Activated B cell treated with CpG ODN at 0.5 μM for 24 hours (primary cell): ENCODE measurements at regions of chr6 and their contacts with region 1.

Region 1: DNA sequence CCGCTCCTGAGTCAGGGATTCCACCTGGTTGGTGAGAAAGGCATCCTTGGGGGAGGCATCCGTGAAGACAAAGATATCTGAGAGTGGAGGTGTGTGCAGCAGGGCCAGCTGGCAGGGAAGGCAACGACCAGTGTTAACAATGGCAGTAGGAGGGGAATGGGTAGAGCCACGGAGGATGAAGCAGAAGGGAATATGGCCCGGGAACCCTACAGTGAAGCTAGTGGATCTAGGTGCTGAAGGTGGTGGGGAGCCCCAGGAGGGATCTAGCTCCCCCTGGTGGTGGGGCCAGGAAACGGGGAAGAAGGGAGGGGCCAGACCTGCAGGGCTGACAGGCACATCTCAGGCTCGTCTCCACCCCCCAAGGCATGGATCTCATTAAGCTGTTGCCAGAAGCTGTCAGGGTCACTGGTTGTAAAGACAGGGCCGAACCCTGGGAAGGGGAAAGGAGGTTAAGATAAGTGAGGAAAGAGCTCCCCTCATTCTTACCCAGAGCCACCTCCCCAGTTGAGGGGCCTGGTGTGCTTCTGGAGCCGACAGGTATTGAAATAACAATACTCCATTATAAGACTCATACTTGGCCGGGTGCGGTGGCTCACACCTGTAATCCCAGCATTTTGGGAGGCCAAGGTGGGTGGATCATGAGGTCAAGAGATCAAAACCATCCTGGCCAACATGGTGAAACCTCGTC is 7.3 kb downstream of the VWA7 start:
- DNase-seq: peak; percentile 76
- ATAC-seq: peak; percentile 98
- H3K4me3 Mint-ChIP-seq: no peak overlapping the region
- H3K27ac Mint-ChIP-seq: no peak overlapping the region
- H3K4me1 Mint-ChIP-seq: peaks cover 16% of the 10 kb centered on the region
- H3K27me3 Mint-ChIP-seq: no peaks in the 10 kb centered on the region
- CTCF ChIP-seq: no peak

Region 2: DNA sequence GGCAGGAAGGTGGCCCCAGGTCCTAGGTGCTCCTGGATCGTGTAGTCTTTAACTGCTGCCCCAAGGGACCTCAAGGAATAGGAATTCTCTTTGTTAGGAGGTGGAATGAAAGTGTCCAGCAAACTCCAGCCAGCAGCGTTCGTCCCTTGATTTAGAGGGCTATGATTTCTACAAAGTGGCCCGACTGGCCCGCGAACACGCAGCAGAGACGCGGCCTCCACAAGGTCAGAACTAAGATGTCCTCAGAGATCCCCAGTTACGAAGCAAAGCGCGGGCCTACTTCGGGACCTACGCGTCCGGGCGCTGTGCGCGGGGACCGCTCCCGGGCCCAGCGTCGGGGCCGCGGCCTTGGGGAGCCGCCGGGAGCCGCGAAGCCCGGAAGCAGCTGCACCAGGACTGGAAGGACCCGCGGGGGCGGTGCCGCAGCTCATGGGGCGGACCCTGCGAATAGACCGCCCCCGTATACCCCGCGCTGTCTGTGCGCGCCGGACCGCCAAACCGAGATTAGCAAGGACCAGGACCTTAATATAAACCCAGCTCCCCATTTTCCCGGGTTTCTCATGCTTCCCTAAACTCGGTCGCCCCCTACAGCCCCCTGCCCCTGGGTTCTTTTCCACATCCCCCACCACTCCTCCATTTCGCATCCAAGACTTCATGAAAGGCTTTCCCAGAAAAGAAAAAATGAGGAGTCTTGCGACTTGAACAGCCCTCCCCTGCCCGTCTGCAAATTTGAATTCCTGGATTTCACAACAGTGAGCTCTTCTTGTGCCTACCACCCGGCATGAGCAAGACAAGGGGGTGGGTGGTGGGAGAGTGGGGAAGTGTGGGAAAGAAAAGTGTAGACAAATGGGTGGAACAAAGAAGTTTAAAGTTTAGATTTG is 109.2 kb before region 1 on chr6 and contains the start of gene C6orf47:
- CTCF ChIA-PET with region 1: no interaction called
- POLR2A ChIA-PET with region 1: interaction called, 14 read pairs
- intact Hi-C with region 1: no loop called
- DNase-seq: peak; percentile 77
- ATAC-seq: peak; percentile 68
- H3K4me3 Mint-ChIP-seq: peak within 1 kb of the TSS; percentile 88
- H3K27ac Mint-ChIP-seq: peak within 1 kb of the TSS; percentile 85
- H3K4me1 Mint-ChIP-seq: peaks cover 75% of the 10 kb centered on the region
- H3K27me3 Mint-ChIP-seq: no peaks in the 10 kb centered on the region
- CTCF ChIP-seq: no peak
- total RNA-seq, gene C6orf47: 29.0 and 29.3 TPM in 2 replicates